Activated T-helper 1 cell treated with anti-CD3 and anti-CD28 coated beads, Interleukin-12 subunit alpha, Interleukin-12 subunit beta, Interleukin-2, Interleukin-4 antibody, amounts not matched to agents 30 ng/mL and 10 ng/mL and 1 ng/mL, durations not matched to agents 14 hours and 24 hours and 36 hours (primary cell): ENCODE measurements at regions of chr3 and their contacts with region 1.

Region 1: GRCh38 chr3:182027366-182027765 is 315.6 kb downstream of the SOX2 start:
- DNase-seq: no peak
- H3K4me3 Mint-ChIP-seq: no peak overlapping the region
- H3K27ac Mint-ChIP-seq: no peak overlapping the region
- H3K4me1 Mint-ChIP-seq: no peaks in the 10 kb centered on the region
- H3K27me3 Mint-ChIP-seq: no peaks in the 10 kb centered on the region

Region 2: DNA sequence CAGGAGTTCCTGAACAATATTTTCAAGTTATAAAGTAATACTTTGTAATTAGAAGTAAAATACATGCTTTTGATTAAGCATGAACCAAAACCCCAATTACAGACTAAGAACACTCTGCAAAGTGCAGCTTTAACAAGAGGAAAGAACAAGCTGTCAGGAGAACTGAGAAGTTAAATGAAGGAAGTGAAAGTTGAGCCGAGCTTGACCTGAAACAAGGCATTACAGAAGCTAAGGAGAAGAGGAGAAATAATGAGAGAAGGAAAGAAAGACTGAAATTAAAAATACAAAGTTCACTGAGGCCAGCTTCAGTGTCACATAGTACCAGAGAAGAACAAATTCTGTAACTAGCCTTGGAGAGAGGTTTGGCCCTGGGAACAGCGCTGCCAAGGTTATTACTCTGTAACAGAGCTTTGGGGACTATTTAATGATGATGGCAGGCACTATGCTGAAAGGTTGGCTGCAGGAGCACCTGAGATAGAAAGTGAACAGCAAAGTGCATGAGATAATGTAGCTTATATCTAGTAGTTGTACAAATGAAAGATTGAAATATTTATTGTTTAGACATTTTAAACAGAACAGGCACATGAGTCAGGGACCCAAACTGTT is 1748.7 kb before region 1 on chr3:
- intact Hi-C with region 1: loop called (anchors 10 kb)
- DNase-seq: no peak
- H3K4me3 Mint-ChIP-seq: no peak overlapping the region
- H3K27ac Mint-ChIP-seq: no peak overlapping the region
- H3K4me1 Mint-ChIP-seq: no peaks in the 10 kb centered on the region
- H3K27me3 Mint-ChIP-seq: no peaks in the 10 kb centered on the region

Region 3: GRCh38 chr3:183161552-183162336 is 1134.4 kb after region 1 on chr3:
- intact Hi-C with region 1: no loop called
- DNase-seq: no peak
- H3K4me3 Mint-ChIP-seq: peak overlapping the region; percentile 87
- H3K27ac Mint-ChIP-seq: peak overlapping the region; percentile 77
- H3K4me1 Mint-ChIP-seq: peaks cover 42% of the 10 kb centered on the region
- H3K27me3 Mint-ChIP-seq: peaks cover 2% of the 10 kb centered on the region